Activated naive CD4-positive, alpha-beta T cell treated with anti-CD3 and anti-CD28 coated beads for 36 hours (primary cell): ENCODE measurements at regions of chr17 and their contacts with region 1.

Region 1: DNA sequence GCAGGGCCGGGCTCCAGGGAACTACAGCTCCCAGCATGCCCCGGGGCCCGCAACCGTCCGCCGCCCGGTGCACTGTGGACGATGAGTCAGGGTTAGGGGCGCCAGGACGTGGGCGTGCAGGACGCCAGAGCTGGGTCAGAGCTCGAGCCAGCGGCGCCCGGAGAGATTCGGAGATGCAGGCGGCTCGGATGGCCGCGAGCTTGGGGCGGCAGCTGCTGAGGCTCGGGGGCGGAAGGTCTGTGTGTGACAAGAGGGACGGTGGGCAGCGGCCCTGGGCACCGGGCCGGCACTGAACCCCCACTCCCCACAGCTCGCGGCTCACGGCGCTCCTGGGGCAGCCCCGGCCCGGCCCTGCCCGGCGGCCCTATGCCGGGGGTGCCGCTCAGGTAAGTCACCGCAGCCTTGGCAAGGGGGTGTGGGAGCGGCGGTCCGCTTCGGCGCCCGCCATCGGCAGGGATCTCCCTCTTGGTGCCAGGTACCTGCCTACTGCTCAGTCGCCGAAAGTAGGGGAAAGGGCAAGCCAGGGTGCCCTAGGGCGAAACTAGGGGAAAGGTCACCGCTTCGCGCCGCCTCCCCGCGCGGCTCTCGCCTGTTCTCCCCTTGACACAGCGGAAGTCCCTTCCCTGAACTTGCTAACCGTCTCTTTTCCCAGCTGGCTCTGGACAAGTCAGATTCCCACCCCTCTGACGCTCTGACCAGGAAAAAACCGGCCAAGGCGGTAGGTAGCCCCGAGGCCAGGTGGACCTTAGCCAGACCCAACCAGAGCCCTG is at the starts of genes ACADVL and DLG4:
- DNase-seq: peak; percentile 88
- H3K4me3 Mint-ChIP-seq: peak within 1 kb of the TSS; percentile 94
- H3K27ac Mint-ChIP-seq: peak within 1 kb of the TSS; percentile 92
- H3K4me1 Mint-ChIP-seq: peaks cover 54% of the 10 kb centered on the region
- H3K27me3 Mint-ChIP-seq: no peaks in the 10 kb centered on the region
- total RNA-seq, gene ACADVL: 263 to 267 TPM
- total RNA-seq, gene DLG4: 13.6 to 13.8 TPM

Region 2: DNA sequence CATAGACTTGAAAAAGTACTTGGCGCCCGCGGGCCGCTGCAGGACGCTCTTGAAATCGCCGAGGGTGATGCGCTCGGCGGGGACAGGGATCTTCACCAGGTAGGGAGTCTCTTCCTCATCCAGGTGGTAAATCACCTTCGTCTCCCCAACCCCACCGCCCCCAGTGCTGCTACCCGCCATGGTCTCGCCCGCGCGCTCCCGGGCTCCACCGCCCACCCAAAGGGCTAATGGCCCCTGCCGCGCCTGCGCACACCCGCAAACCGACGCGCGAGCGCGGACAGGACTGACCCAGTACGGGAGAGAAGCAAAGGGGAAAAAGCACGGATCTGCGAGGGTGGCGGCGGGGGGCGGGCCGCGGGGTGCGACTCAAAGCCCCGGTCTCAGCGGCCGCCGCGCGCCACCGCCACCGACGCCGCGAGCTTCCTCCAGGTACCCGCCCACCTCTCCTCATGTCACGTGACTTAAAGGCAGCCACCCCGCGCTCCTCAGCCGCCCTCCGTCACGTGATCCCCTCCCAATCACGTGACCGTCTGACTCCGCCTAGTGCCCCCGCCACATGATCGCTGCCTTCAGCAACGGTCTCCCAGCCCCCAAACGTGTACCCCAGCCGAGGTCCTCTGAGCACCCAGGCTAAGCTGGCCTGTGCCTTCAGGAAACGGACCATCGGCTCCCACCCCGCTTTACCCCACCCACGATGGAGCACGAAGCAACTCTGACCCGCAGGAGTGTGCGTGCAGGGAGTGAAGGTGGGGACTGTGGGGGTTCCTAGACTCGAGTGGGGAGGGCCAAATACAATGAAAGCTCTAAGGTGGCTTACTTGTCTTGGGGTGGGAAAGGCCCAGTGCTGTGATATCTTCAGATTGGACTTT is 14.3 kb after region 1 on chr17 and contains the start of gene DVL2:
- CTCF ChIA-PET with region 1: interaction called, 15 read pairs
- intact Hi-C with region 1: loop called (anchors 1 kb)
- DNase-seq: peak; percentile 96
- H3K4me3 Mint-ChIP-seq: peak within 1 kb of the TSS; percentile 90
- H3K27ac Mint-ChIP-seq: peak within 1 kb of the TSS; percentile 88
- H3K4me1 Mint-ChIP-seq: peaks cover 52% of the 10 kb centered on the region
- H3K27me3 Mint-ChIP-seq: no peaks in the 10 kb centered on the region
- total RNA-seq, gene DVL2: 26.7 to 29.4 TPM

Region 3: DNA sequence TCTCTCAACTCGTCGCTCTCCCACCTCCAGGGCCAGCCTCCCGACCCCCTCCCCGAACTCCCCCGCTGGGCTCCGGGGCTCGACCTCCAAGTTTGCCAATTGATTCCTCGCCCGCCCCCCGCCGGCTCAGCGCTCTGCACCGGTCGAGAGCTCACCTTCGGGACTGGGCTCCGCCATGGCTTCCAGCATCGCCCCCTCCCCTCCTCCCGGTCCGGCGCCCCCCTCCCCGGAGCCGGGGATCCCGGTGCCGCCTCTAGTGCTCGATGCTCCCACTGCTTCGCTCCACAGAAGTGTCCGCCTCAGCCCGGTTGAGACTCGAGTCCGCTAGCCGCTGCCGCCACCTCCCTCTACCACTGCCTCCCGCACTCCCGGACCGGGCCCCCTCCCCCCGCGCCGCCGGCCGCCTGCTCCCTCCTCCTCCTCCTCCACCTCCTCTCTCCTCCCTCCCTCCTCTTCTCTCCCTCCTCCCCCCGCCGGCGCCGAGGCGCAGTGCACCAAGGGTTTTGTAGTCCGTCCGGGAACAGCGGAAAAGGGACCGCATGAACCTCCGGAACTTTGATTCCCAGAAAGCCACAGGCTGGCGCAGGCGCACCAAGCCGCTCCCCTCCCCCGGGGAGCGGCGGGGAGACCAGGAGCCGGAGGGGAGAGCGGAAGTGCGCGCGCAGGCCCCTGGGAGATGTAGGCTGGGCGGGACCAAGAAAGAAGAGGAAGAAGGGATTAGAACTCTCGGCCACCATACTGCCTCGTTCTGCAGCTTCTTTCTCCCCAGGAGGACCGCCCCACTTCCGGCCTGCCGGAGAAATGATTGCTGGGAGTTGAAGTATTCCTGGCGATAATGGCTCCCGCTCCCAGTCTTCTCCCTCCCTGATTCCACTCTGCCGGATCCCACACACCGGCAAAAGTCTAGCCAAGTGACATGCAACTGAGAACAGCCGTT is 19.4 kb after region 1 on chr17 and contains the start of gene PHF23:
- CTCF ChIA-PET with region 1: interaction called, 16 read pairs
- intact Hi-C with region 1: loop called (anchors 1 kb)
- DNase-seq: peak; percentile 99
- H3K4me3 Mint-ChIP-seq: peak within 1 kb of the TSS; percentile 94
- H3K27ac Mint-ChIP-seq: peak within 1 kb of the TSS; percentile 98
- H3K4me1 Mint-ChIP-seq: peaks cover 64% of the 10 kb centered on the region
- H3K27me3 Mint-ChIP-seq: no peaks in the 10 kb centered on the region
- total RNA-seq, gene PHF23: 8.4 to 10.0 TPM

Region 4: GRCh38 chr17:7252176-7253043 is 32.4 kb after region 1 on chr17 and contains the start of gene ELP5:
- CTCF ChIA-PET with region 1: interaction called, 5 read pairs
- intact Hi-C with region 1: loop called (anchors 1 kb)
- DNase-seq: peak; percentile 93
- H3K4me3 Mint-ChIP-seq: peak within 1 kb of the TSS; percentile 86
- H3K27ac Mint-ChIP-seq: peak within 1 kb of the TSS; percentile 99
- H3K4me1 Mint-ChIP-seq: peaks cover 34% of the 10 kb centered on the region
- H3K27me3 Mint-ChIP-seq: no peaks in the 10 kb centered on the region
- total RNA-seq, gene ELP5: 52.4 to 53.5 TPM

Region 5: GRCh38 chr17:7280519-7281429 is 60.8 kb after region 1 on chr17:
- CTCF ChIA-PET with region 1: no interaction called
- intact Hi-C with region 1: loop called (anchors 1 kb)
- DNase-seq: peak; percentile 91
- H3K4me3 Mint-ChIP-seq: peak overlapping the region; percentile 74
- H3K27ac Mint-ChIP-seq: no peak overlapping the region
- H3K4me1 Mint-ChIP-seq: peaks cover 20% of the 10 kb centered on the region
- H3K27me3 Mint-ChIP-seq: peaks cover 17% of the 10 kb centered on the region

Region 6: GRCh38 chr17:7296189-7296902 is 76.3 kb after region 1 on chr17:
- CTCF ChIA-PET with region 1: interaction called, 9 read pairs
- intact Hi-C with region 1: loop called (anchors 1 kb)
- DNase-seq: peak; percentile 72
- H3K4me3 Mint-ChIP-seq: peak overlapping the region; percentile 32
- H3K27ac Mint-ChIP-seq: no peak overlapping the region
- H3K4me1 Mint-ChIP-seq: peaks cover 19% of the 10 kb centered on the region
- H3K27me3 Mint-ChIP-seq: peaks cover 24% of the 10 kb centered on the region